IMR-90 (cell line): ENCODE measurements at regions of chr12 and their contacts with region 1.

Region 1: DNA sequence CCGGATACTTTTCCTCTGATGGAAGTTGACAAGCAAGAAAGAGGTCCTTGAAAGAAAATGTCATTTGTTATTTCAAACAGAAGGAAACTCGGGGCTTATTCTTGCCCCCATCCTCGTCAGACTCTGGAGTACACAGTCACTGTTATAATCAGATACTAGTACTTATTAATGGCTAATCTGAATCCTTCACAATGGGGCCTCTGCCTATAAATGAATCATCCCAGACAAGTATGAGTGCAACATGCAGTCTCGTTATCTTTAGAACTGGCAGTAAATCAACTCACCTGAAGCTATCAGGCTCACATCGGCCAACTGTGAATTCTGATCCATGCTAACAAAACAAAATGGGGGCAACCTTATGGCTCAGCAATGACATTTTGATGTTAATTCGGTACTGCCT is 216.7 kb downstream of the GRIN2B start:
- DNase-seq: no peak
- ATAC-seq: no peak
- H3K4me3 ChIP-seq: no peak overlapping the region
- H3K27ac ChIP-seq: no peak overlapping the region
- H3K4me1 ChIP-seq: no peaks in the 10 kb centered on the region
- H3K27me3 ChIP-seq: no peaks in the 10 kb centered on the region
- CTCF ChIP-seq: no peak
- POLR2A ChIP-seq: no peak
- RAD21 ChIP-seq: no peak

Region 2: DNA sequence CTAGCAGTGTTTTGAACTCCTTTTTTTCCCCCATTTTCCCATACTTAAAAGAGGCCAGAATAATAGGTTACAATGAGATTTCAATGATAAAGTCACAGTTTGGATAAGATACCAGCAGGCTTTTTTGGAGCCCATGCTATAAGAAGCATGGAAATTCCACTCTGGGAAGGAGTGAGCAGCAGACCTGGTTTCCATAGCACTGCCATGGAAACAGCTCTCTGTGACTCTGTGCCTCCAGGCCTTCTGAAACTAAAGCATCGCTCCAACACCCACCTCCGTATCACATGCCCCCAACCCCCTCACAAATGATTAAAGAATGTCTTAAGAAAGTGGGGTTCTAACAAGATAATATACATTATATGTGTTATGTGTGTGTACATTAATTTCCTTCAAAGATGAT is 51.6 kb after region 1 on chr12:
- CTCF ChIA-PET with region 1: no interaction called
- POLR2A ChIA-PET with region 1: no interaction called
- dilution Hi-C with region 1: no loop called
- in situ Hi-C with region 1: loop called (anchors 10 kb)
- intact Hi-C with region 1: no loop called
- DNase-seq: no peak
- ATAC-seq: no peak
- H3K4me3 ChIP-seq: no peak overlapping the region
- H3K27ac ChIP-seq: no peak overlapping the region
- H3K4me1 ChIP-seq: no peaks in the 10 kb centered on the region
- H3K27me3 ChIP-seq: no peaks in the 10 kb centered on the region
- CTCF ChIP-seq: no peak
- POLR2A ChIP-seq: no peak
- RAD21 ChIP-seq: no peak